ENCODE measurements at regions of chr7 and their contacts with region 1.

Region 1: DNA sequence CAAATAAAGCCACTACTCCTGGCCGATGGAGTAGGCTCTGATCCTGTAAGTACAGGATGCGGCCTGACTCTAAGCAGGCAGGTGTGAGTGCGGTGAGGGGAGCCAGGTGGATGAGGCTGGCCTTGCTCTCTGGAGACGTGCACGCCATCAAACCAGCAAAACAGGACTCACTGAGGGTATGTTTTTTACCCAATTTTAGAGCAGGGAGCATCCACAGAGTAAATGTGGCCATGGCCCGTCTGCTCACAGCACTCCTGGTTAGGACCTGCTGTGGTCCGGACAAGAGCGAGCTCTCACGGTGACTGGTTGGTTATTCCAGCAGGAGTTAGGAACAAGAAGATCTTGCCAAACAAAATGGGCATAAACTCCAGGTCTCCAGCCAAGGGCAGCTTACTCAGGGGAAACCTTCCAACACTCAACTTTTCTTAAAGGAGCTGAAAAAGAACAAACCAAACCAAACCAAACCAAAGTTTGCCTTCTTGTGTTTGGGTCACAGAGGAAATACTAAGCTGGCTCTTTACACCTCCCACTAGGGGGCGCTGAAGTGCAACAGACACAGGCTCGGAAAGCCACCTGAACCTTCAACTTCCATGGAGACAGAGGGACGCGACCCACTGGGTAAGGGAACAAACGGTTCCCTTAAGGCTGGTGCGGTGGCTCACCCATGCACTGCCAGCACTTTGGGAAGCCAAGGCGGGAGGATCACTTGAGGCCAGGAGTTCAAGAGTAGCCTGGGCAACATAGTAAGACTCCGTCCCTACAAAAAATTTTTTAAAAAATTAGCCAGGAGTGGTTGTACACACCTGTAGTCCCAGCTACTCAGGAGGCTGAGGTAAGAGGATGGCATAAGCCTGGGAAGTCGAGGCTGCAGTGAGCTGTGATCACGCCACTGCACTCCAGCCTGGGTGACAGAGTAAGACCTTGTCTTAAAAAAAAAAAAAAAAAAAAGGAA is 122.4 kb downstream of the CLEC2L start:
- DNase-seq: peak; percentile 93
- H3K4me3 Mint-ChIP-seq: no peak overlapping the region
- H3K27ac Mint-ChIP-seq: peak overlapping the region; percentile 43
- H3K4me1 Mint-ChIP-seq: peaks cover 21% of the 10 kb centered on the region
- H3K27me3 Mint-ChIP-seq: no peaks in the 10 kb centered on the region
- CTCF ChIP-seq: peak; percentile 93

Region 2: DNA sequence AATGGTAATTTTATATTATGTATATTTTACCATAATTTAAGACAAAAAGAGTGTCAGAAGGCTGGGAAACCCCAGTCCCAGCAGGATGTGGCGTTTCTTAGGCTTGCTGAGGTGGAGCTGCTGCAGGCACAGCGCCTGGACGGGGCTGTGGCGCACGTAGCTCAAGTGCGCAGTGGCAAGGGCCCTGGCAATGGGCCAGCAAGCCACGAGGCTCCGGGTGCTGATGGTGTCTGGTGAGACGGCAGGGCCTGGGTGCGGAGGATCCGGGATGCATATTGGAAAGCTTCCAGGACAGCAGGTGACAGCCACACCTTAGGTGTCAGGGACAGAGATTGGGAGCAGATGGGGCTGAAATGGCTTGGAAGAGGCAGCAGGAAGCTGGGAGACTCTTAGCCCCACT is 85.2 kb before region 1 on chr7:
- CTCF ChIA-PET with region 1: no interaction called
- POLR2A ChIA-PET with region 1: no interaction called
- intact Hi-C with region 1: no loop called
- DNase-seq: no peak
- H3K4me3 Mint-ChIP-seq: no peak overlapping the region
- H3K27ac Mint-ChIP-seq: no peak overlapping the region
- H3K4me1 Mint-ChIP-seq: no peaks in the 10 kb centered on the region
- H3K27me3 Mint-ChIP-seq: no peaks in the 10 kb centered on the region
- CTCF ChIP-seq: no peak

Region 3: GRCh38 chr7:139626817-139627216 is 19.0 kb before region 1 on chr7:
- CTCF ChIA-PET with region 1: interaction called, 124 read pairs
- POLR2A ChIA-PET with region 1: no interaction called
- intact Hi-C with region 1: no loop called
- DNase-seq: no peak
- H3K4me3 Mint-ChIP-seq: no peak overlapping the region
- H3K27ac Mint-ChIP-seq: no peak overlapping the region
- H3K4me1 Mint-ChIP-seq: no peaks in the 10 kb centered on the region
- H3K27me3 Mint-ChIP-seq: no peaks in the 10 kb centered on the region
- CTCF ChIP-seq: no peak

Region 4: DNA sequence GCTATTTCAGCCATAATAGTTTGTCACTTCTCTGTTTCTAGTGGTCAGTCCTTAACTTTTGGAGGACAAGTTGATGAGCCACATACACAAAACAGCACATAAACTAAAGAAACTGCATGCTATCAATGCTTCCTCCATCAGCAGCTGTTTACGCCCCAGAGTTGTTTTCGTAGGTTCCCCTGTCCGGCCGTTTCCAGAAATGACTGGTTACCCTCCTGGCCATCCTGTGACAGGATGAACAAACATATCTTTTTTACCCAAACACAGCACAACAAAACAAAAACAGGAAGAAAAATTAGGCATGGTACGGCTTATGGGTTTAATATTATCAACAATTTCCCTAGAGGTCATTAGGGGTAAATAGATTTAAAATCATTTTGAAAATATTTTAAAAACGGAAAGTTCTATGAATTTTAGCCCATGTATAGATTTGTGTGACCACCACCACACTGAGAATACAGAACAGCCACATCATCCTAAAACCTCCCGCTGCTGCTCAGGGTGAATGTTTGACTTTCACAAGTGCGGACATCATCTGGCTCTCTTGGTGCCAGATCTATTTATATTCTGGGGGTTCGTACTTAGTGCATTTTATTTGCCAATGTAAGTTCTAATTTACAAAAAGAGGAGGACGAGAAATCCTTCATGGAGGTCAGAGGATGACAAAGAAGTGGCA is 57.1 kb after region 1 on chr7:
- CTCF ChIA-PET with region 1: interaction called, 3 read pairs
- POLR2A ChIA-PET with region 1: no interaction called
- intact Hi-C with region 1: loop called (anchors 2 kb)
- DNase-seq: no peak
- H3K4me3 Mint-ChIP-seq: no peak overlapping the region
- H3K27ac Mint-ChIP-seq: peak overlapping the region; percentile 88
- H3K4me1 Mint-ChIP-seq: peaks cover 21% of the 10 kb centered on the region
- H3K27me3 Mint-ChIP-seq: no peaks in the 10 kb centered on the region
- CTCF ChIP-seq: no peak

Region 5: DNA sequence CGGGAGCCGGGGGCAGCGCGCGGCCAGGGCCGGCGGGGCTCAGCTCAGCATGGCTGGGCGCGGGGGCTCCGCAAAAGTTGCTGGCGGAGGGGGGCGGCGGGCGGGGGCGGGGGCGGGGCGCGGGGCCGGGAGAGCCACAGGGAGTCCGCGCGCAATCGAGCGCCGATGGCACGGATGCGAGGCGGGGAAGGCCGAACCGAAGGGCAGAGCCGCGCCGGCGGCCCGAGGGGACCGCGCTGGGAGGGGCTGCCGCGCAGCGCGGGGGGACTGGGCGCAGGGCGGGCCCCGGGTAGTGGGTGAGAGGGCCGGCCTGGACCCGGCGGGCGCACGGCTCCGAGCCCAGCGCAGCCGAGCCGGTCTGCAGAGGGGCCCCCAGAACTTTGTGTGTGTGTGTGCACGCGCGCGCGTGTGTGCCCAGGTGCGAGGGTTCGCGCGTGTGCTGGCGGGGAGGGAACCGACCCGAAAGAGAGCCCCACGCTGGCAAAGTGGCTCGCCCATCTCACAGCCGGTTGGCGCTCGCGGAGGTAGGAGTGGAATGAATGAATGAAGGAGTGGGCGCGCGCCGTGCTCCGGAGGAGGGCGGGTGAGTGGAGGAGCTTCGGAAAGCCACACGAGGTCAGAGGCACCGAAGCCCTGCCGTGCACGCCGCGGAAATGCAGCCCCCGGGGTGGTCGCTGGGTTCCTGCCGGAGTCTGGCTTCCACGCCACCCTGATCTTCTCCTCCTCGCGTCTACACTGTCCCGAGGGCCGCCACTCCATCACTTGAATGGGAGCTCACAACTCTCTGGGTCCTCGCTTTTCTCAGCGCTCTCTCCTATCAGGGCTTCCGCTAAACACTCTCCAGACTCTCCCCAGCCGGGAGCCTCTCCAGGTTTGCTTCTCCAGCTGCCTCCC is 132.3 kb after region 1 on chr7 and contains the start of gene HIPK2:
- CTCF ChIA-PET with region 1: interaction called, 33 read pairs
- POLR2A ChIA-PET with region 1: interaction called, 3 read pairs
- intact Hi-C with region 1: loop called (anchors 1 kb)
- DNase-seq: peak; percentile 68
- H3K4me3 Mint-ChIP-seq: peak within 1 kb of the TSS; percentile 96
- H3K27ac Mint-ChIP-seq: peak within 1 kb of the TSS; percentile 98
- H3K4me1 Mint-ChIP-seq: peaks cover 40% of the 10 kb centered on the region
- H3K27me3 Mint-ChIP-seq: no peaks in the 10 kb centered on the region
- CTCF ChIP-seq: no peak
- total RNA-seq, gene HIPK2: 64.3 and 93.9 TPM in 2 replicates

Region 6: GRCh38 chr7:139995017-139995931 is 349.4 kb after region 1 on chr7:
- CTCF ChIA-PET with region 1: interaction called, 179 read pairs
- POLR2A ChIA-PET with region 1: no interaction called
- intact Hi-C with region 1: loop called (anchors 2 kb)
- DNase-seq: peak; percentile 73
- H3K4me3 Mint-ChIP-seq: no peak overlapping the region
- H3K27ac Mint-ChIP-seq: no peak overlapping the region
- H3K4me1 Mint-ChIP-seq: peaks cover 12% of the 10 kb centered on the region
- H3K27me3 Mint-ChIP-seq: no peaks in the 10 kb centered on the region
- CTCF ChIP-seq: no peak

Measured in MCF 10A (cell line).